ENCODE measurements at regions of chr1 and their contacts with region 1.

Region 1: GRCh38 chr1:204989266-204990058 is 53.5 kb upstream of the CNTN2 start:
- DNase-seq: peak; percentile 33
- H3K4me3 Mint-ChIP-seq: no peak overlapping the region
- H3K27ac Mint-ChIP-seq: no peak overlapping the region
- H3K4me1 Mint-ChIP-seq: peaks cover 7% of the 10 kb centered on the region
- H3K27me3 Mint-ChIP-seq: peaks cover 6% of the 10 kb centered on the region

Region 2: GRCh38 chr1:205003393-205004131 is 14.1 kb after region 1 on chr1:
- intact Hi-C with region 1: no loop called
- DNase-seq: no peak
- H3K4me3 Mint-ChIP-seq: no peak overlapping the region
- H3K27ac Mint-ChIP-seq: no peak overlapping the region
- H3K4me1 Mint-ChIP-seq: no peaks in the 10 kb centered on the region
- H3K27me3 Mint-ChIP-seq: peaks cover 2% of the 10 kb centered on the region

Region 3: DNA sequence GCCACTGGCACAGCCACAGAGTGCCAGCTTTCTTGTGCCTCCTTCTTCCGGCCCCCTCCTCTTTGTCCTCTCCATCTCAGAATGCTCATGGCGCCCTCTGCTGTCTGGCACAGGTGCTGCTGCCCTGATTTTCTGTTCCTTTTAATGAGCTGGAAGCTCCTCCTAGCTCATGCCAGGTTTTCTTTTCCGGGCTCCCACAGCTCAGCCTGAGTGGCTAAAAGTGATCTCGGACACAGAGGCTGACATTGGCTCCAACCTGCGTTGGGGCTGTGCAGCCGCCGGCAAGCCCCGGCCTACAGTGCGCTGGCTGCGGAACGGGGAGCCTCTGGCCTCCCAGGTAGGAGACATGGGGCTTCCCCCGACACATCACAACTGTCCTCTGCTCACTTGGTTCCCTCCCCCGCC is 72.2 kb after region 1 on chr1:
- intact Hi-C with region 1: loop called (anchors 1 kb)
- DNase-seq: peak; percentile 60
- H3K4me3 Mint-ChIP-seq: no peak overlapping the region
- H3K27ac Mint-ChIP-seq: no peak overlapping the region
- H3K4me1 Mint-ChIP-seq: no peaks in the 10 kb centered on the region
- H3K27me3 Mint-ChIP-seq: no peaks in the 10 kb centered on the region

Region 4: DNA sequence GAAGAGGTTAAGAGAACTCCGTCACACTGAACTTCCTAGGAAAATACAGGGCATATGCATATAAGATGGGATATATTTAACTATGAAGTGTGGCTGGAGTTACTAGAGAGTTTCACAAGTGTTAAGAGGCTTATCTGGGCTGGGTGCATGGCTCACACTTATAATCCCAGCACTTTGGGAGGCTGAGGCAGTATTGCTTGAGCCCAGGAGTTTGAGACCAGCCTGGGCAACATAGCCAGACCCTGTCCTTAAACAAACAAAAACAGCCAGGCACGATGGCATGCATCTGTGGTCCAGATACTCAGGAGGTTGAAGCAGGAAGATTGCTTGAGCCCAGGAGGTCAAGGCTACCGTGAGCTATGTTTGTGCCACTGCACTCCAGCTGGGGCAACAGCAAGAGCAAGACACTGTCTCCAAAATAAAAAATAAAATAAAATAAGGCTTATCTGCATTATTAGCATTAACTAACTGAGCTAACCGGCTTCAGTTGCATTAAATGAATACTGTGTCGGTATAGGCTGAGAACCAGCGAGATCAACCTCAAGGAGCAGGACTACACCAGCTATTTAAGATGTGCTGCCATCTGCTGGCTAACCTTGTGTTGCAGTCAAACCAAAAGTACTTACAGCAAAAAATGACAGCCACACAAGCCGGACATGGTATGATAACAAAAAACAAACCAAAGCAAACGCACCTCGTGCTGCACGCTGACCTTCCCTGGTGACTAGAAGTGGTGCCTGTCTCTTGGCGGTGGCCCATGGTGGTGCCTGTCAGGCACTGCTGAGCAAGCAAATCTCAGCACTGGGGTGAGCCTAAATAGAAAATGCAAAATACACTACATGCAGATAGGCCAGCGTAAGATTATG is 152.0 kb after region 1 on chr1:
- intact Hi-C with region 1: loop called (anchors 2 kb)
- DNase-seq: peak; percentile 64
- H3K4me3 Mint-ChIP-seq: no peak overlapping the region
- H3K27ac Mint-ChIP-seq: no peak overlapping the region
- H3K4me1 Mint-ChIP-seq: peaks cover 6% of the 10 kb centered on the region
- H3K27me3 Mint-ChIP-seq: no peaks in the 10 kb centered on the region

Measured in activated T-helper 2 cell treated with anti-CD3 and anti-CD28 coated beads, Interferon-gamma antibody, Interleukin-2, Interleukin-4, amounts not matched to agents 10 μg/mL and 5 μg/mL and 100 μg/mL, durations not matched to agents 14 hours and 24 hours and 36 hours (primary cell).